CD4-positive, alpha-beta memory T cell (primary cell): ENCODE measurements at regions of chr12 and their contacts with region 1.

Region 1: GRCh38 chr12:108856428-108857157 is 790 bp downstream of the SSH1 start:
- DNase-seq: peak; percentile 52 to 87 (median 59)
- H3K4me3 ChIP-seq: peak overlapping the region; percentile 54 to 74
- H3K4me3 Mint-ChIP-seq: peak overlapping the region; percentile 93 to 98 (median 96)
- H3K27ac ChIP-seq: peak overlapping the region; percentile 67
- H3K27ac Mint-ChIP-seq: peak overlapping the region; percentile 83 to 99 (median 96)
- H3K4me1 ChIP-seq: peaks cover 30% of the 10 kb centered on the region
- H3K4me1 Mint-ChIP-seq: peaks cover 30 to 45% (median 38%) of the 10 kb centered on the region in 4 donors
- H3K27me3 ChIP-seq: no peaks in the 10 kb centered on the region
- H3K27me3 Mint-ChIP-seq: no peaks in the 10 kb centered on the region

Region 2: GRCh38 chr12:107372229-107372658 is 1484.3 kb before region 1 on chr12:
- CTCF ChIA-PET with region 1: no interaction called
- POLR2A ChIA-PET with region 1: no interaction called
- intact Hi-C with region 1: loop called (anchors 10 kb)
- DNase-seq: peak; percentile 64 to 78 (median 70)
- H3K4me3 ChIP-seq: peak overlapping the region; percentile 25 to 27
- H3K4me3 Mint-ChIP-seq: peak overlapping the region; percentile 57 to 89 (median 78)
- H3K27ac ChIP-seq: peak overlapping the region; percentile 62
- H3K27ac Mint-ChIP-seq: peak overlapping the region; percentile 88 to 94 (median 91)
- H3K4me1 ChIP-seq: peaks cover 77% of the 10 kb centered on the region
- H3K4me1 Mint-ChIP-seq: peaks cover 60 to 90% (median 77%) of the 10 kb centered on the region in 4 donors
- H3K27me3 ChIP-seq: no peaks in the 10 kb centered on the region
- H3K27me3 Mint-ChIP-seq: no peaks in the 10 kb centered on the region

Region 3: GRCh38 chr12:107760809-107761501 is 1095.6 kb before region 1 on chr12 and contains the start of gene PRDM4:
- CTCF ChIA-PET with region 1: no interaction called
- POLR2A ChIA-PET with region 1: no interaction called
- intact Hi-C with region 1: loop called (anchors 5 kb)
- DNase-seq: peak; percentile 87 to 94 (median 93)
- H3K4me3 ChIP-seq: peak within 1 kb of the TSS; percentile 77 to 82
- H3K4me3 Mint-ChIP-seq: peak within 1 kb of the TSS; percentile 89 to 95 (median 92)
- H3K27ac ChIP-seq: peak within 1 kb of the TSS; percentile 64
- H3K27ac Mint-ChIP-seq: peak within 1 kb of the TSS; percentile 90 to 98 (median 94)
- H3K4me1 ChIP-seq: peaks cover 41% of the 10 kb centered on the region
- H3K4me1 Mint-ChIP-seq: peaks cover 17 to 45% (median 26%) of the 10 kb centered on the region in 4 donors
- H3K27me3 ChIP-seq: no peaks in the 10 kb centered on the region
- H3K27me3 Mint-ChIP-seq: no peaks in the 10 kb centered on the region
- total RNA-seq, gene PRDM4: 35.8 to 38.3 TPM

Region 4: DNA sequence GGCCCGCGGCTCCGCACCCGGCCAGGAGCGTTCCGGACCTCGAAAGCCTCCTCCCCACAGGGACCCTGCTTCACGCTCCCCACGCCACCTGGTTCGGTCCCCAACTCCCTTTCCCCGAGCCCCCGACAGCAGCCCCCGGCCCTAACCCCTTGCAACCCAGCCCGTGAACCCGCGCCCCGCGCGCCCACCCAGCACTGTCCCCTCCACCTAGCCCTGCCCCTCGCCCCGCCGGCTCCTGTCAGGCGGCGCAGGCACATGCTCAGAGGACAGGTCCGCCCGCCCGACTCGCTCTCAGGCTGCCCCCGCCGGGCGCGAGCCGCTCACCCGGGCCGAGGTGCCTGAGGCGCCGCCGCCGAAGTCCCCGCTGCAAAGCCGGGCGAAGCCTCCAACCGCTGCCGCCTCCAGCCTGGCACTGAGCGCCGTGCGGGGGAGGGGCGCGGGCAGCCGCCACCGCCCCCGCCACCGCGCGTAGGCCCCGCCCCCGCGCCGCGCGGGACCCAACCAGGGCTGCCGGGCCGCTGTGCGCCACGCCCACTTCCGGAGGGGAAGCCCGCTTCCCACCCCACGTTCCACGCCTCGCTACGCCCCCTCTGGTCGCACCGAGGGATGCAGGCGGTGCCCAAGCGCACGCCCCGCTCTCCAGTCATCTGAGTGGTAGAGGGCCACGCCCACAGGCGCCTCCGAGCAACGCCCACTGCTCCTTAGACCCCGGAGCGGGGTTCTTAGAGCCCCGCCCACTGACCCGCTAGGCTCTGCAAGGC is 125.3 kb before region 1 on chr12 and contains the start of gene CORO1C:
- CTCF ChIA-PET with region 1: no interaction called
- POLR2A ChIA-PET with region 1: interaction called, 4 read pairs
- intact Hi-C with region 1: loop called (anchors 1 kb)
- DNase-seq: peak; percentile 94 to 97 (median 95)
- H3K4me3 ChIP-seq: peak within 1 kb of the TSS; percentile 88 to 91
- H3K4me3 Mint-ChIP-seq: peak within 1 kb of the TSS; percentile 89 to 97 (median 95)
- H3K27ac ChIP-seq: peak within 1 kb of the TSS; percentile 69
- H3K27ac Mint-ChIP-seq: peak within 1 kb of the TSS; percentile 92 to 99 (median 98)
- H3K4me1 ChIP-seq: peaks cover 5% of the 10 kb centered on the region
- H3K4me1 Mint-ChIP-seq: peaks cover 11 to 28% (median 26%) of the 10 kb centered on the region in 4 donors
- H3K27me3 ChIP-seq: no peaks in the 10 kb centered on the region
- H3K27me3 Mint-ChIP-seq: no peaks in the 10 kb centered on the region
- total RNA-seq, gene CORO1C: 10.3 to 11.9 TPM

Region 5: GRCh38 chr12:108890212-108890611 is 33.6 kb after region 1 on chr12:
- CTCF ChIA-PET with region 1: no interaction called
- POLR2A ChIA-PET with region 1: no interaction called
- intact Hi-C with region 1: no loop called
- DNase-seq: no peak
- H3K4me3 ChIP-seq: no peak overlapping the region
- H3K4me3 Mint-ChIP-seq: no peak overlapping the region
- H3K27ac ChIP-seq: no peak overlapping the region
- H3K27ac Mint-ChIP-seq: no peak overlapping the region
- H3K4me1 ChIP-seq: no peaks in the 10 kb centered on the region
- H3K4me1 Mint-ChIP-seq: peaks cover 0 to 1% (median 0%) of the 10 kb centered on the region in 4 donors
- H3K27me3 ChIP-seq: no peaks in the 10 kb centered on the region
- H3K27me3 Mint-ChIP-seq: peaks cover 0 to 2% of the 10 kb centered on the region in 2 donors

Region 6: DNA sequence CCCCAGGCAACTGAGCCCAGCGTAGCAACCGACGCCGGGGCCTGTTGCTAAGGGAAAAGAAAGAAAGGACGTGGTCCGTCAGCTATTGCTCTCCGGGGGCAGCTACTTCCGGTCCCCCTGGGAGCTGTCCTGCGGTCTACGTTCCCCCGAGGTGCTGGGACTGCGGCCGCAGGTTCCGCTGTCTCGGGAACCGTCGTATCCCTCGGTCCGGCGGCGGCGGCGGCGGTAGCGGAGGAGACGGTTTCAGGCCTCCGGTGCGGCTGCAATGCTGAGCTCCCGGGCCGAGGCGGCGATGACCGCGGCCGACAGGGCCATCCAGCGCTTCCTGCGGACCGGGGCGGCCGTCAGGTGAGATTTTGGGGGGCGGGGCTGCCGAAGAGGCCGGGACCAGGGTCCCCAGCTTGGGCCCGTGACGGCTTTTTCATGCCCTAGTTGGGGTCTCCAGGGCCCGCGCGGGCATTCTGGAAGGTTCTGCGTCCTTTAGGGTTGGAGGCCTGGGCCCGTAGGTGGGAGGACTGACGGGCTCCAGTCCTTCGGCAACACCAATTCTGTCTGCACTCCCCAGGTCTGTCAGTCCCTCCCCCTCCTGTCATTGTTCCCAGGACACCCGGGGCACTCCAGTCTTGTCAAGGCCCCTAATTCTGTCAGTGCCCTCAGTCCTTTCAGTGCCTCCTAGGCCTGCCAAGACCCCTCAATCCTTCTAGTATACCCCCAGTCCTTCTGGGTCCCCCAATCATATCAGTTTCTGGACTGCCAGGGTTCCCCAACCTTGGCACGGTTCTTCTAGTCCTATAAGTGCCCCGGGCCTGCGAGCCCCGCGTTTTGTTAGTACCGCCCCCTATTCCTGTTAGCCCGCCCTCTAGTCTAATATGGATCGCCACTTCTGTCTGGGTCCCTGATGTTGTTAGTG is 196.1 kb after region 1 on chr12 and contains the start of gene USP30:
- CTCF ChIA-PET with region 1: no interaction called
- POLR2A ChIA-PET with region 1: interaction called, 10 read pairs
- intact Hi-C with region 1: loop called (anchors 2 kb)
- DNase-seq: peak; percentile 75 to 83 (median 79)
- H3K4me3 ChIP-seq: peak within 1 kb of the TSS; percentile 87 to 96
- H3K4me3 Mint-ChIP-seq: peak within 1 kb of the TSS; percentile 93 to 100 (median 96)
- H3K27ac ChIP-seq: peak within 1 kb of the TSS; percentile 85
- H3K27ac Mint-ChIP-seq: peak within 1 kb of the TSS; percentile 87 to 100 (median 98)
- H3K4me1 ChIP-seq: peaks cover 18% of the 10 kb centered on the region
- H3K4me1 Mint-ChIP-seq: peaks cover 10 to 27% (median 17%) of the 10 kb centered on the region in 4 donors
- H3K27me3 ChIP-seq: no peaks in the 10 kb centered on the region
- H3K27me3 Mint-ChIP-seq: no peaks in the 10 kb centered on the region
- total RNA-seq, gene USP30: 8.1 to 14.2 TPM

Region 7: GRCh38 chr12:109477185-109477962 is 620.8 kb after region 1 on chr12 and contains the starts of genes KCTD10 and UBE3B:
- CTCF ChIA-PET with region 1: no interaction called
- POLR2A ChIA-PET with region 1: no interaction called
- intact Hi-C with region 1: loop called (anchors 5 kb)
- DNase-seq: peak; percentile 85 to 89 (median 87)
- H3K4me3 ChIP-seq: peak within 1 kb of the TSS; percentile 93 to 97
- H3K4me3 Mint-ChIP-seq: peak within 1 kb of the TSS; percentile 97 to 99 (median 97)
- H3K27ac ChIP-seq: peak within 1 kb of the TSS; percentile 87
- H3K27ac Mint-ChIP-seq: peak within 1 kb of the TSS; percentile 98 to 100 (median 99)
- H3K4me1 ChIP-seq: peaks cover 38% of the 10 kb centered on the region
- H3K4me1 Mint-ChIP-seq: peaks cover 31 to 67% (median 37%) of the 10 kb centered on the region in 4 donors
- H3K27me3 ChIP-seq: no peaks in the 10 kb centered on the region
- H3K27me3 Mint-ChIP-seq: no peaks in the 10 kb centered on the region
- total RNA-seq, gene KCTD10: 29.2 to 31.9 TPM
- total RNA-seq, gene UBE3B: 55.8 to 58.1 TPM